Naive thymus-derived CD4-positive, alpha-beta T cell (primary cell): ENCODE measurements at regions of chr7 and their contacts with region 1.

Region 1: GRCh38 chr7:7944619-7945282 is 23.8 kb upstream of the GLCCI1 start:
- DNase-seq: peak in 7 of 9 donors; percentile 23 to 39 (median 33)
- ATAC-seq: peak; percentile 90
- H3K4me3 ChIP-seq: peak overlapping the region; percentile 32
- H3K4me3 Mint-ChIP-seq: peak overlapping the region; percentile 52 to 82 (median 72)
- H3K27ac ChIP-seq: peak overlapping the region; percentile 16
- H3K27ac Mint-ChIP-seq: peak overlapping the region; percentile 43 to 86 (median 80)
- H3K4me1 ChIP-seq: peaks cover 11 to 33% of the 10 kb centered on the region in 2 donors
- H3K4me1 Mint-ChIP-seq: peaks cover 14 to 25% (median 20%) of the 10 kb centered on the region in 7 donors
- H3K27me3 ChIP-seq: no peaks in the 10 kb centered on the region
- H3K27me3 Mint-ChIP-seq: no peaks in the 10 kb centered on the region

Region 2: GRCh38 chr7:7889791-7890568 is 54.8 kb before region 1 on chr7:
- CTCF ChIA-PET with region 1: no interaction called
- POLR2A ChIA-PET with region 1: no interaction called
- intact Hi-C with region 1: loop called in 1 of 2 experiments (anchors 5 kb)
- DNase-seq: no peak
- ATAC-seq: no peak
- H3K4me3 ChIP-seq: no peak overlapping the region
- H3K4me3 Mint-ChIP-seq: no peak overlapping the region
- H3K27ac ChIP-seq: no peak overlapping the region
- H3K27ac Mint-ChIP-seq: peak overlapping the region in 1 of 9 donors; percentile 31
- H3K4me1 ChIP-seq: no peaks in the 10 kb centered on the region
- H3K4me1 Mint-ChIP-seq: no peaks in the 10 kb centered on the region
- H3K27me3 ChIP-seq: no peaks in the 10 kb centered on the region
- H3K27me3 Mint-ChIP-seq: no peaks in the 10 kb centered on the region

Region 3: DNA sequence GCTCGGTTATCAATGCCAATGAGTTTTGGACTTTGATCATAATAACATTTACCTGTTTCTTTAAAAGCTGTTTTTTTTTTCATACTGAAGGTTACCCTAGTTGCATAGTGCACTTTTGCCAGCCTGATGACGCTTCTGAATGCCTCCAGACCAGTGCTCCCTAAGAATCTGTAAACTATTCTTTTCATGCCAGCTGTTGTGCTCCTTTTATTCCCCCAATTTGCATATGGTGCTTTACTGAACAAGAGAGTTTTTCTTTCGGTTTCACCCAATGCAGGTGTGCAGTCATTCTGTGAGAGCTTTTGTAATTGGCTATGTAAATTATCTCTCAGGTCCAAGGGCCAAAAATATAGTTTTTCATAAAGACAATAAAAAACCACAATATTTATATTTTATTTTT is 24.3 kb before region 1 on chr7:
- CTCF ChIA-PET with region 1: interaction called, 3 read pairs
- POLR2A ChIA-PET with region 1: no interaction called
- intact Hi-C with region 1: loop called in 1 of 2 experiments (anchors 2 kb)
- DNase-seq: peak in 3 of 9 donors; percentile 5 to 13 (median 7)
- ATAC-seq: peak; percentile 44
- H3K4me3 ChIP-seq: peak overlapping the region; percentile 26
- H3K4me3 Mint-ChIP-seq: peak overlapping the region in 8 of 10 donors; percentile 60 to 83 (median 70)
- H3K27ac ChIP-seq: no peak overlapping the region
- H3K27ac Mint-ChIP-seq: peak overlapping the region in 2 of 9 donors; percentile 18 to 71
- H3K4me1 ChIP-seq: peaks cover 0 to 8% of the 10 kb centered on the region in 2 donors
- H3K4me1 Mint-ChIP-seq: peaks cover 14 to 33% (median 18%) of the 10 kb centered on the region in 7 donors
- H3K27me3 ChIP-seq: no peaks in the 10 kb centered on the region
- H3K27me3 Mint-ChIP-seq: no peaks in the 10 kb centered on the region